Spleen (tissue), 13 donors: ENCODE measurements at regions of chr3 and their contacts with region 1.

Region 1: GRCh38 chr3:38479431-38480092 is 16.6 kb upstream of the EXOG start:
- DNase-seq: no peak
- H3K4me3 ChIP-seq: no peak overlapping the region
- H3K27ac ChIP-seq: no peak overlapping the region
- H3K4me1 ChIP-seq: no peaks in the 10 kb centered on the region
- H3K27me3 ChIP-seq: no peaks in the 10 kb centered on the region
- CTCF ChIP-seq: peak; percentile 58 to 83 (median 74)
- POLR2A ChIP-seq: no peak

Region 2: GRCh38 chr3:38117748-38118420 is 361.7 kb before region 1 on chr3:
- intact Hi-C with region 1: loop called (anchors 5 kb)
- DNase-seq: peak; percentile 87
- H3K4me3 ChIP-seq: no peak overlapping the region
- H3K27ac ChIP-seq: no peak overlapping the region
- H3K4me1 ChIP-seq: peaks cover 0 to 33% (median 2%) of the 10 kb centered on the region in 6 donors
- H3K27me3 ChIP-seq: no peaks in the 10 kb centered on the region
- CTCF ChIP-seq: peak; percentile 74 to 91 (median 83)
- POLR2A ChIP-seq: no peak

Region 3: GRCh38 chr3:38346587-38347410 is 132.8 kb before region 1 on chr3 and contains the start of gene XYLB:
- intact Hi-C with region 1: loop called (anchors 2 kb)
- DNase-seq: peak; percentile 97
- H3K4me3 ChIP-seq: peak within 1 kb of the TSS; percentile 59 to 98 (median 80)
- H3K27ac ChIP-seq: peak within 1 kb of the TSS in 7 of 8 donors; percentile 27 to 72 (median 54)
- H3K4me1 ChIP-seq: peaks cover 0 to 31% (median 17%) of the 10 kb centered on the region in 6 donors
- H3K27me3 ChIP-seq: no peaks in the 10 kb centered on the region
- CTCF ChIP-seq: peak; percentile 43 to 91 (median 82)
- POLR2A ChIP-seq: no peak
- total RNA-seq, gene XYLB: 1.8 to 12.3 (median 2.6) TPM